Activated T-helper 1 cell treated with anti-CD3 and anti-CD28 coated beads, Interleukin-12 subunit alpha, Interleukin-12 subunit beta, Interleukin-2, Interleukin-4 antibody, amounts not matched to agents 30 ng/mL and 10 ng/mL and 1 ng/mL, durations not matched to agents 14 hours and 24 hours and 36 hours (primary cell): ENCODE measurements at regions of chrX and their contacts with region 1.

Region 1: GRCh38 chrX:23816179-23816578 is 33.2 kb downstream of the SAT1 start:
- DNase-seq: no peak
- H3K4me3 Mint-ChIP-seq: no peak overlapping the region
- H3K27ac Mint-ChIP-seq: no peak overlapping the region
- H3K4me1 Mint-ChIP-seq: no peaks in the 10 kb centered on the region
- H3K27me3 Mint-ChIP-seq: no peaks in the 10 kb centered on the region

Region 2: GRCh38 chrX:23797371-23798128 is 18.6 kb before region 1 on chrX:
- intact Hi-C with region 1: loop called (anchors 1 kb)
- DNase-seq: no peak
- H3K4me3 Mint-ChIP-seq: no peak overlapping the region
- H3K27ac Mint-ChIP-seq: no peak overlapping the region
- H3K4me1 Mint-ChIP-seq: peaks cover 5% of the 10 kb centered on the region
- H3K27me3 Mint-ChIP-seq: no peaks in the 10 kb centered on the region

Region 3: GRCh38 chrX:24034485-24034884 is 218.3 kb after region 1 on chrX:
- intact Hi-C with region 1: no loop called
- DNase-seq: no peak
- H3K4me3 Mint-ChIP-seq: no peak overlapping the region
- H3K27ac Mint-ChIP-seq: no peak overlapping the region
- H3K4me1 Mint-ChIP-seq: no peaks in the 10 kb centered on the region
- H3K27me3 Mint-ChIP-seq: peaks cover 2% of the 10 kb centered on the region